ENCODE measurements at regions of chr4 and their contacts with region 1.

Region 1: DNA sequence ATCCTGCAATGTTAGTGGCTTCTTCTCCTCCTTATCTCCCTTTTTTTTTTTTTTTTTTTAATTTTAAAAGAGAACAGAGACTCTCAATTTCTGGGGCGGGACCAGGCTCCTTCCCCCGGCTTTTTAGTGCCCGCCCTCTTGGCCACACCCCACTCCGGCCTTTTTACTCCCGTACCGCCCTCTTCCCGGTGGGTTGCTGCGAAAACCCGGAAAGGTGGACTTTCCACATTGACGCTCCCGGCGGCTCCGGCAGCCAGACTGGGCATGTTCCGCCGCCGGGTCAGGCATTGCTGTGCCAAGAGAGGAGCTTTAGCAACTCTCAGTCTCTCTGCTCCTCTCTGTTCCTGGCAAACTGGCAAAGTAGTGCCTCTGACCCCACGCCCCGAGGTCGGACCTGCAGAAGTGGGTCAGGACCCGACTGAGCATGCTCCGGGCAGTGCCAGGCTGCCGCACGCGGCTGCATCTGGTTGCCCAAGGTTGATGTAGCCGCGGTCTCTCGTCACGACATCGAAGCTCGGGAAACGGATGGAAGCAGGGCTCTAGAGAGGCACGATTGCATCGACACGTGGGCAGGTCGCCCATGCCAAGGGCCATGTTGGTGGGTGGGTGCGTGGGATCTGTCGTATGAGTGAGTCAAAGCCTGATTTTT is 1.1 kb upstream of the MFAP3L start:
- DNase-seq: peak; percentile 96
- H3K4me3 Mint-ChIP-seq: peak overlapping the region; percentile 89
- H3K27ac Mint-ChIP-seq: peak overlapping the region; percentile 76
- H3K4me1 Mint-ChIP-seq: peaks cover 10% of the 10 kb centered on the region
- H3K27me3 Mint-ChIP-seq: peaks cover 67% of the 10 kb centered on the region

Region 2: DNA sequence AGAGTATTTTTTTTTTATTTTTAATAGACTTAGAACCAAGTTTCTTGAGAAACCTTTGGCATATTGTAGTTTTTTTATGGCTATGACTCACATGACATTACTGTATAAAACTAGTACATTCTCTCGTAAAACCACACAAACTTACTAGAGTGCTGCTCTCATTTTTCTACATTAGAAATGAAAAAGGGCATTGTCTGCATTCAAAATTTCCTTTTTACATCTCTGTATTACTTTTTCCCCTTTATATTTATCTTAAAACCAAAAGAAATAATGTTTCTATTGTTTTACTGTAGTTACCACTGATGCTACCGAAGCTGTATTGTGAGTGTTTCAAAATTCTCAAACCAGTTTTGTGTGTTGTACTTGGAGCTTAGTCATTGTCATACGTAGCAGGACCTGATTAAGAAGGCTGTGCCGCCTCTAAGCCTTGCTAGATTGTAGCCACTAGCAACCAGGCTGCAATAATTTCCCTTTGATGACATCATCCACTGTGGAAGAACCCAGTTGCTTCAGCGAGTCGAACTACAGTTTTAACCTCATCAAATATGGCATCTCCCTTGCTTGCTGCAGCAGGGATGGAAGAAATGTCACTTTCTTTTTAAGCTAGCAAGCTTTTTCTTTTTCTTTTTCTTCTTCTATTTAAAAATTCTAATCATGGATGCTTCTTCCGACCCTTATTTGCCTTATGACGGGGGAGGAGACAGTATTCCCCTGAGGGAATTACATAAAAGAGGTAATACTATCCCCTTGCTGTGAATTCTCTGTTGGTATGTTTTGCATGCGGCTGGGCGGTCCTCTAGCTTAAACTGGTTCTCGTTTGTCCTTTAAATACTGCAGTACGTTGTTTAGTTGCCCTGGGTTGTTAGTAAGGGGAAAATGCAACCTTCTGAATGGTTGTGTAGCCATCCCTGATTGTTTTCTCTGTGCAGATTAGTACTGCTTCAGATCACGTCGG is 367.3 kb before region 1 on chr4:
- intact Hi-C with region 1: loop called (anchors 1 kb)
- DNase-seq: peak; percentile 92
- H3K4me3 Mint-ChIP-seq: peak overlapping the region; percentile 88
- H3K27ac Mint-ChIP-seq: peak overlapping the region; percentile 96
- H3K4me1 Mint-ChIP-seq: peaks cover 16% of the 10 kb centered on the region
- H3K27me3 Mint-ChIP-seq: no peaks in the 10 kb centered on the region

Region 3: DNA sequence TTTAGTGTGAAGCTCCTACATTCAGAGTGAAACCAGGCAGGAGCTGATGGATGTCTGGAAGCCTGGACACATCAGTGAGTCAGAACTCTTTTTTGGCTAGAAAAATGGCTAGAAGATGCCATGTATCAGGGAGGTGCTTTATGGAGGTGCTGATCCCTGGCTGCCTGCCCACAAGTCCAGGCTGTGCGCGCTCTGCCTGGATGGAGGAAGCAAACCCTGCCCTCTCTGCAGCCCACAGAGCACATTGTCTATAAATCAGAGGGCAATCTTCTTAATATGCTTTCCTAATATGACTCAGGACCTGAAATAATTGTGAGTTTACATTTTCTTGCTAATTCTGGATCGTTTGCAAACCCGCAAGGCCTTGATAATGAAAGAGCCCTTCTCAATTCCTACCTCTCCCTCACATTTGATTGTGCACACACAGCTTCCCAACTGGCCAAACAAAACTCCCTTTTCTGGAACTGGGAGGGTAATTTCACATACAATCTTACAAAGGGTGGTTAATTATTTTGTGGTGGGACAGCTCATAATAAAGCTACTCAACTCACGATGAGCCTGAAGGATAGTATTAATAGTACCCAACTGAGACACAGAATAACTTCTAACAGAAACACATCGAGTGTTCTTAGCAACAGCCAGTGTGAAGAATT is 12.8 kb before region 1 on chr4:
- intact Hi-C with region 1: no loop called
- DNase-seq: no peak
- H3K4me3 Mint-ChIP-seq: no peak overlapping the region
- H3K27ac Mint-ChIP-seq: no peak overlapping the region
- H3K4me1 Mint-ChIP-seq: no peaks in the 10 kb centered on the region
- H3K27me3 Mint-ChIP-seq: no peaks in the 10 kb centered on the region

Measured in activated CD4-positive, alpha-beta T cell treated with anti-CD3 and anti-CD28 coated beads, Interleukin-2, amount 10 ng/mL, durations not matched to agents 24 days and 14 days (primary cell).